Right ventricle myocardium inferior (tissue), 1 donor: ENCODE measurements at regions of chr9 and their contacts with region 1.

Region 1: DNA sequence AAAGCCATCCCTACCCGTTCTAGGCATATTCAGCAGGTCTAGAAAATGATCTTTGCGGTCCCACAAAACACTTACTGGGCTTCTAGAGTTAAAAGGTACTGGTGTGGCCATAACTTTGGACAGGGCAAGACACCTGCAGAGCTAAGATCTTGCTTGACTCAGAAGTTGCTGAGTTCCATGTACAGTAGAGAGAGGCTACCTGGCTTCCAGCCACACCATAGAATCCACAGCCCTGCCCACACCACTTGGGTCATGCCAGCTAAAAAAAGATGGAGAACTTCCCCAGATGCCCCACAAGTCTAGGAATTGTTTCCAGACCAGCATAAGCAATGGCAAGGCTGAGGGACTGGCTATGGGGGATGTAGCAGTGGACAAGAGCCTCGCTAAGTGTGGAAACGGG is 52.1 kb downstream of the ABCA1 start:
- DNase-seq: no peak
- ATAC-seq: no peak

Region 2: GRCh38 chr9:104907278-104907951 is 31.5 kb after region 1 on chr9:
- intact Hi-C with region 1: loop called (anchors 1 kb)
- DNase-seq: no peak
- ATAC-seq: peak; percentile 29